ENCODE measurements at regions of chr2 and their contacts with region 1.

Region 1: DNA sequence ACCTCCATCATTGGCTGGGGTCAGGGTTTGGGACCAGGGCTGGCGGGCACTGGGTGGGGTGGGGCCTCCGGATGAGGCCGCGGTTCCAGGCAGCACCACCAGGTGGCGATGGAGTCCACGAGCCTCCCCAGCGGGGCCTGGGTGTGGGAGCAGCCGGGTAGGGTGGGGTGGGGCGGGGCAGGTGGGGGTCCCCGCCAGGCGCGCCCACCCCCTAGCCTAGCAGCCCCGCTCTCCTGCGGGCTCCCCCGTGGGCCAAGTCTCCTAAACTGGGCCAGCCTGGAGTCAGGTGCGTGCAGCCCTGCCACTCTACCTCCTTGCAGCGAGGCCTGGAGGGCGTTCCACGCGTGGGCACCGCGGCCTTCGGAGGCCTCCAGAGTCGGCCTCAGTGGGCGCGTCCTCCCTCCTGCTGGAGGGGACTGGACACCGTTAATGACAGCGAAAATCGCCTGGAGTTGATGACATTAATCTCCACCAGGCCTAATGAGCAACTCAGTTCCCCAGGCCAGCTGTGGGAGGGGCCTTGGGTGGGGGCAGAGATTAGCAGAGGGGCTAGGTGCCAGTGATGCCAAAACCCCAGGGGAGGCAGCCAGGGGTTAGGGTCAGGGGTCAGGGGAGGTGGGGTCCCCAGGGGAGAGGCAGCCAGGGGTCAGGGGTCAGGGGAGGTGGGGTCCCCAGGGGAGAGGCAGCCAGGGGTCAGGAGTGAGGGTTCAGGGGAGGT is 187.6 kb downstream of the TWIST2 start:
- DNase-seq: peak in 6 of 7 donors; percentile 43 to 75 (median 60)
- H3K4me3 ChIP-seq: no peak overlapping the region
- H3K27ac ChIP-seq: no peak overlapping the region
- H3K4me1 ChIP-seq: peaks cover 0 to 3% of the 10 kb centered on the region in 2 donors
- H3K27me3 ChIP-seq: no peaks in the 10 kb centered on the region
- CTCF ChIP-seq: peak; percentile 40 to 95 (median 72)
- POLR2A ChIP-seq: no peak

Region 2: GRCh38 chr2:239106314-239106908 is 70.9 kb after region 1 on chr2:
- intact Hi-C with region 1: loop called (anchors 2 to 5 kb)
- DNase-seq: peak; percentile 66 to 90 (median 73)
- H3K4me3 ChIP-seq: no peak overlapping the region
- H3K27ac ChIP-seq: peak overlapping the region in 2 of 5 donors; percentile 1 to 14
- H3K4me1 ChIP-seq: peaks cover 0 to 9% of the 10 kb centered on the region in 2 donors
- H3K27me3 ChIP-seq: no peaks in the 10 kb centered on the region
- CTCF ChIP-seq: peak; percentile 41 to 78 (median 67)
- POLR2A ChIP-seq: no peak

Region 3: GRCh38 chr2:239979243-239980023 is 943.9 kb after region 1 on chr2:
- intact Hi-C with region 1: loop called in 1 of 2 experiments (anchors 10 kb)
- DNase-seq: peak in 1 of 7 donors; percentile 52
- H3K4me3 ChIP-seq: no peak overlapping the region
- H3K27ac ChIP-seq: no peak overlapping the region
- H3K4me1 ChIP-seq: no peaks in the 10 kb centered on the region
- H3K27me3 ChIP-seq: no peaks in the 10 kb centered on the region
- CTCF ChIP-seq: no peak
- POLR2A ChIP-seq: no peak